ENCODE measurements at regions of chr4 and their contacts with region 1.

Region 1: DNA sequence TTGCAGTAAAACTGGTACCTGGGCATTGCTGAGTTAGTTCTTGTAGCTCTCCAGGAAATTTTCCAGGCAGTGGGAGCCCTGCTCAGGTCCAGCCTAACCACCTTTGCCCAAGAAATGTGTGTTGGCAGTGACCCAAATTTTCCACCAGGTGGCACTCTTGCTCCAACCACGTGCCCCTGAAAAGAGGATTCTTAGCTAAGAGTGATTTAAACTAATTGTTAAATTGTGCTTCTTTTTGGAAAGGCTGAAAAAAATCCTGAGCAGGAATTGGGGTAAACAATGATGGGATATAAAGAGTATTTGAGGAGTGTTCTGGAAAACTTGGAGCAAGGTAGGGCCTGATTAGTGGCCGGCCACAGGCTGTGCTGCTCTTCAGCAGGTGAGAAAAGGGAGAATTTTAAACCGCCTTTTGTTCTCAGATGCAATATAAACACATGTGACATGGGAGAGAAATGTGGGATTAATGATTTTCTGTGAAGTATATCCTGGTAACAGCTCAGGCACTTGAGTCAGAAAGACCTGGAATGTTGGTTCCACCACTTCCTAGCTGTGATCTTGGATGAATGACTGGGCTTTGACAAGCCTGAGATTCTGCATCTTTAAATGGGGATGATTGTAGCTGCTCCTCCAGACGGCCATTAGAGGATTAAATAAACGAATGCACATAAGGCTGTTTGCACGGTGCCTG is 219.6 kb downstream of the PTTG2 start:
- DNase-seq: peak; percentile 69 to 86 (median 73)
- ATAC-seq: peak; percentile 75 to 84 (median 79)
- H3K4me3 ChIP-seq: no peak overlapping the region
- H3K27ac ChIP-seq: peak overlapping the region in 2 of 3 donors; percentile 1 to 15
- H3K4me1 ChIP-seq: peaks cover 0 to 36% (median 16%) of the 10 kb centered on the region in 4 donors
- H3K27me3 ChIP-seq: no peaks in the 10 kb centered on the region
- CTCF ChIP-seq: peak; percentile 93 to 96 (median 94)
- POLR2A ChIP-seq: no peak

Region 2: GRCh38 chr4:38078590-38079421 is 101.0 kb before region 1 on chr4:
- intact Hi-C with region 1: loop called in 1 of 2 experiments (anchors 10 kb)
- DNase-seq: no peak
- ATAC-seq: peak; percentile 18 to 36 (median 22)
- H3K4me3 ChIP-seq: no peak overlapping the region
- H3K27ac ChIP-seq: peak overlapping the region in 2 of 3 donors; percentile 36 to 65
- H3K4me1 ChIP-seq: peaks cover 0 to 38% (median 0%) of the 10 kb centered on the region in 4 donors
- H3K27me3 ChIP-seq: no peaks in the 10 kb centered on the region
- CTCF ChIP-seq: no peak
- POLR2A ChIP-seq: no peak

Region 3: DNA sequence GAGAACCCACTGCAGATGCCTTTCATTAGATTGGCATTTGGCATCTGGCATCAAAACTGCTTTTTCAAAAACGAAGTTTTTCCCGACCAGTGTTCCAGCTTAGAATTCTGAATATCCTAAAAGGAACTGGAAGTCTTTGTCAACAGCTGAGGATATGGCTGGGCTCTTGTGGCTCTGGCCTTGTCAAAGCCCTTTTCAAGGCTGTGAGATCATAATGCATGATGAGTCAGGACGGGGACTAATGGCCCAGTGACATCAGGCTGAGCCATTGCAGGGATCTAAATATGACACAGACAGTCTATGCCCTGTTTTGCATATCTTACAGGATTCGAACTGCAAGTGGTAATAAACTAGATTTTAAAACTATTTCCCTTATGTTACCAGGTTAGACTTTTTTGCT is 86.8 kb after region 1 on chr4:
- intact Hi-C with region 1: no loop called
- DNase-seq: no peak
- ATAC-seq: peak in 1 of 4 donors; percentile 61
- H3K4me3 ChIP-seq: no peak overlapping the region
- H3K27ac ChIP-seq: no peak overlapping the region
- H3K4me1 ChIP-seq: no peaks in the 10 kb centered on the region
- H3K27me3 ChIP-seq: no peaks in the 10 kb centered on the region
- CTCF ChIP-seq: no peak
- POLR2A ChIP-seq: no peak